ENCODE measurements at regions of chr6 and their contacts with region 1.

Region 1: DNA sequence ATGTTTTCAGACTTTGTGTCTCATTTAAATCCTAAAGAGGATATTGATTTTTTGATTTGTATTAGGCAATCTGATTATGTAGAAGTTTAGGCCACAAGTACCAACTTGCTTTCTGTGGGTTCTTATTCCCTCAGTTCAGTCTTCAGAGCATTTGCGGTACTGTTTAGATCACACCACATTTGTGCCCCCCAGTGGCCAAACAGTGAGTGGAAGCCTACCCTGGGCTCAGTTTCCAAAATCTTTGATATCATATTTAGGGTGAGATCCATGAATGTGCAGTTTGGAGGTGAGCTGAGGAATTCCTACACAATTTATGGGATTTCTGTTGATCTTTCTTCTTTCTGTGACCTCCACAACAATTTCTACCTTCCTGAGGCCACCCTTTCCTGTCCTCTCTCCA is 92.3 kb upstream of the FUT9 start:
- H3K4me3 Mint-ChIP-seq: no peak overlapping the region
- H3K27ac Mint-ChIP-seq: no peak overlapping the region
- H3K4me1 Mint-ChIP-seq: no peaks in the 10 kb centered on the region
- H3K27me3 Mint-ChIP-seq: no peaks in the 10 kb centered on the region

Region 2: GRCh38 chr6:95431637-95432228 is 491.8 kb before region 1 on chr6:
- intact Hi-C with region 1: loop called (anchors 10 kb)
- H3K4me3 Mint-ChIP-seq: no peak overlapping the region
- H3K27ac Mint-ChIP-seq: no peak overlapping the region
- H3K4me1 Mint-ChIP-seq: no peaks in the 10 kb centered on the region
- H3K27me3 Mint-ChIP-seq: no peaks in the 10 kb centered on the region

Region 3: GRCh38 chr6:96051555-96051954 is 128.0 kb after region 1 on chr6:
- intact Hi-C with region 1: no loop called
- H3K4me3 Mint-ChIP-seq: no peak overlapping the region
- H3K27ac Mint-ChIP-seq: no peak overlapping the region
- H3K4me1 Mint-ChIP-seq: no peaks in the 10 kb centered on the region
- H3K27me3 Mint-ChIP-seq: no peaks in the 10 kb centered on the region